Tibial artery (tissue), 4 donors: ENCODE measurements at regions of chr19 and their contacts with region 1.

Region 1: GRCh38 chr19:44304659-44305193 is at the start of gene ZNF235:
- DNase-seq: peak; percentile 88 to 94
- H3K4me3 ChIP-seq: peak within 1 kb of the TSS; percentile 73 to 78
- H3K27ac ChIP-seq: peak within 1 kb of the TSS; percentile 76 to 82
- H3K4me1 ChIP-seq: peaks cover 0 to 12% (median 7%) of the 10 kb centered on the region in 4 donors
- H3K27me3 ChIP-seq: no peaks in the 10 kb centered on the region
- CTCF ChIP-seq: no peak

Region 2: DNA sequence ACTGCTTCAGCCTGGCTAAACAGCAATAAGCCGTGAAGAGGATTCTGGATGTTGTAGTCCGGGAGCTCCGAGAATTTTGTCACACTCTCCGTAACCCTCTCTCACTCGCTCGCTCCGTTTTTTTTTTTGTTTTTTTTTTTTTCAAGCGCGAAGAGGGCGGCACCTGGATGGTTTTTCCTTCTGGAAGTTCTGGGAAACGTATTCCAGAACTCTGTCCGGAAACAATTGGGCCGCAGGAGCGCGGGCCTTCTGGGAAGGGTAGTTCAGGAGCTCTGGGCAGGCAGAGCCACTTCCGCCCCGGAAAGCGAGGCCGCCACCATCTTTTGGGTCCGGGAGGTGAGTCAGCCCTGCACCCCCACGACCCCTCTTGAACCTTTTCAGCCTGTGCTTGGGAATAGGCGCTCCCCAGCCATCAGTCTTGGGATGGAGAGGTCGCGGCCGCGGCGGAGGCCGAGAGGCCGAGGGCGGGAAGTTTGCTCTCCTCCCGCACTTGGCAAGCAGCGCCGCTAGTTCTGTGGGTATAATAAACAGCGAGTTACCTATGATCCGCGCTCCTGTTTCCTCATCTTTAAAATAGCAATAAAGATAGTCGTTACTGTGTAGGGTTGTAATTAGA is 92.4 kb before region 1 on chr19 and contains the start of gene ZNF227:
- intact Hi-C with region 1: loop called (anchors 5 kb)
- DNase-seq: peak; percentile 93 to 97
- H3K4me3 ChIP-seq: peak within 1 kb of the TSS; percentile 66 to 76
- H3K27ac ChIP-seq: peak within 1 kb of the TSS; percentile 81 to 87
- H3K4me1 ChIP-seq: peaks cover 0 to 11% (median 2%) of the 10 kb centered on the region in 4 donors
- H3K27me3 ChIP-seq: no peaks in the 10 kb centered on the region
- CTCF ChIP-seq: no peak